ENCODE measurements at regions of chr11 and their contacts with region 1.

Region 1: GRCh38 chr11:65569973-65570918 is at the start of gene ZNRD2:
- DNase-seq: peak; percentile 95 to 99 (median 98)
- ATAC-seq: peak; percentile 64 to 78
- H3K4me3 Mint-ChIP-seq: peak within 1 kb of the TSS; percentile 97 to 100 (median 99)
- H3K27ac Mint-ChIP-seq: peak within 1 kb of the TSS; percentile 94 to 100 (median 99)
- H3K4me1 Mint-ChIP-seq: peaks cover 38 to 88% (median 75%) of the 10 kb centered on the region in 4 donors
- H3K27me3 Mint-ChIP-seq: no peaks in the 10 kb centered on the region
- polyA plus RNA-seq, gene ZNRD2: 62.9 to 86.3 (median 80.1) TPM

Region 2: DNA sequence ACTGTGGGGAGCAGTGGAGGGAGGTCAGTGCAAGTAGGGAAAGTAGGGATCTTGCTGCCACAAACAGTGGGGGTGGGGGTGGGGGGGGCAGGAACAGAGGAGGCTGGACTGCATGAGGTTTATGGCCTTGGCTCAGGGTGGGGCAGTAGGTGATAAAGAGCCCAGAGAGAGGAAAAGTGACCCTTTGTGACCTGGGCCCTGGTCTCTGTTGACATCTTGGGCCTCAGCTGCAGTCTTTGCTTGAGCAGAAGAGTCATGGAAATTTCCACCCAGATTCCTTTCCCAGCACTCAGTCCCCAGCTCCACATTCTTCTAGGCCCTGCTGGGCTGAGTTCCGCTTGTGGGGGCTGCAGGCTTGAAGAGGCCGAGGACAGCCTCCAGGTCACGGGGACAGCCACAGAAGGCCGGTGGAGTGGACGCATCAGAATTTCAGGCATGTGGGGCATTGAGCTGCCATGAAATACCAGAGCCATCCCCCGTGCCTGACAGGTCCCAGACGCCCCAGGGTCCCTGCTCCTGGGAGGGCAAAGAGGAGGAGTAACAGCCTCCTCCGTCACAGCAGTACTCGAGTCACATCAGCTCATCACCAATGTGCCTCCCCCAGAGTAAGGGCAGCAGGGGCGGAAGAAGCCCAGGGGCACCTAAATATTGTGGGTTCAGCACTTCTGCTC is 81.1 kb before region 1 on chr11:
- POLR2A ChIA-PET with region 1: no interaction called
- DNase-seq: no peak
- ATAC-seq: no peak
- H3K4me3 Mint-ChIP-seq: peak overlapping the region in 2 of 10 donors; percentile 45 to 70
- H3K27ac Mint-ChIP-seq: peak overlapping the region in 2 of 10 donors; percentile 25 to 85
- H3K4me1 Mint-ChIP-seq: peaks cover 12 to 43% (median 32%) of the 10 kb centered on the region in 4 donors
- H3K27me3 Mint-ChIP-seq: no peaks in the 10 kb centered on the region

Region 3: GRCh38 chr11:65506770-65507505 is 63.3 kb before region 1 on chr11:
- POLR2A ChIA-PET with region 1: interaction called, 14 read pairs
- DNase-seq: peak in 5 of 10 donors; percentile 50 to 57 (median 56)
- ATAC-seq: peak; percentile 36 to 55
- H3K4me3 Mint-ChIP-seq: no peak overlapping the region
- H3K27ac Mint-ChIP-seq: peak overlapping the region in 9 of 10 donors; percentile 67 to 95 (median 89)
- H3K4me1 Mint-ChIP-seq: peaks cover 38 to 66% (median 58%) of the 10 kb centered on the region in 4 donors
- H3K27me3 Mint-ChIP-seq: no peaks in the 10 kb centered on the region

Region 4: GRCh38 chr11:65540297-65541092 is 29.8 kb before region 1 on chr11:
- POLR2A ChIA-PET with region 1: interaction called, 260 read pairs
- DNase-seq: peak; percentile 79 to 99 (median 86)
- ATAC-seq: peak; percentile 77 to 84
- H3K4me3 Mint-ChIP-seq: peak overlapping the region; percentile 77 to 90 (median 85)
- H3K27ac Mint-ChIP-seq: peak overlapping the region; percentile 80 to 96 (median 86)
- H3K4me1 Mint-ChIP-seq: peaks cover 15 to 41% (median 31%) of the 10 kb centered on the region in 4 donors
- H3K27me3 Mint-ChIP-seq: no peaks in the 10 kb centered on the region

Region 5: GRCh38 chr11:65551572-65552398 is 18.5 kb before region 1 on chr11:
- POLR2A ChIA-PET with region 1: interaction called, 260 read pairs
- DNase-seq: peak in 7 of 10 donors; percentile 33 to 77 (median 49)
- ATAC-seq: peak; percentile 25 to 30
- H3K4me3 Mint-ChIP-seq: peak overlapping the region; percentile 16 to 91 (median 63)
- H3K27ac Mint-ChIP-seq: peak overlapping the region; percentile 61 to 93 (median 82)
- H3K4me1 Mint-ChIP-seq: peaks cover 51 to 77% (median 75%) of the 10 kb centered on the region in 4 donors
- H3K27me3 Mint-ChIP-seq: no peaks in the 10 kb centered on the region

Region 6: GRCh38 chr11:65588199-65589054 is 18.2 kb after region 1 on chr11:
- POLR2A ChIA-PET with region 1: interaction called, 139 read pairs
- DNase-seq: peak; percentile 57 to 88 (median 75)
- ATAC-seq: peak; percentile 94
- H3K4me3 Mint-ChIP-seq: peak overlapping the region in 2 of 10 donors; percentile 11 to 67
- H3K27ac Mint-ChIP-seq: peak overlapping the region; percentile 53 to 86 (median 74)
- H3K4me1 Mint-ChIP-seq: peaks cover 14 to 35% (median 35%) of the 10 kb centered on the region in 4 donors
- H3K27me3 Mint-ChIP-seq: no peaks in the 10 kb centered on the region

Region 7: DNA sequence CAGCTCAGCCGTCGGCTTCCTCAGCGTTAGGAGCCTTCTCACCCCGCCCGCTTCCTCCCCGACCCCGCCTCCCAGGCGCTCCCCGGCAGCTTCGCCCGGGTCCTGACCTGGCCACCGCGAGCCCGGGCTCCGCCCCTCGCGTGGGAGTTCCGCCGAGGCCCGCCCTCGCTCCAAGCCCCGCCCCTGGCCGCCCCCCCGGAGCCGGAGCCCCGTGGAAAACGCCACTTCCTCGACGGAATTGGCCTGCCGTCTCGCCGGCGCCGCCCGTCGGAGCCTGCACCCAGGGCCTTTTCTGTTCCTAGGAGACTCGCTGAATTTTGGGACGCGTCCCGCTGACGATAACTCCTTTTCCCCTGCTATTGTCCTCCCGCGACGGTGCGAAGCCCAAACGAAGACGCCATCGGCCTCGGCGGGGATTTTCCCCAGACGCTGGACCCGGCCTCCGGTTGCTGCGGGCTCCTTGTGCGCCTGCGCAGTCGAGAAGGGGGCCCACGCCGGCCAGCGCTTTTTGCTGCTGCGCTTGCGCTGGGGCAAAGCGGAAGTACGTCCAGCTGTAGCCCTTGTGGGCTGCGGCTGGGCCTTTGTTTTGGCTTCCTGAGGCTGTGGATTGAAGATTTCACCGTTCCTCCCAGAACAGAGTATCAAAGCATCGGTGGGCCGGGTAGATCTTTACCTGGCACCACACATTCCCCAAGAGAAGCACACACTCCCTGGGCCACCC is 82.4 kb after region 1 on chr11:
- POLR2A ChIA-PET with region 1: interaction called, 13 read pairs
- DNase-seq: peak; percentile 92 to 99 (median 96)
- ATAC-seq: peak; percentile 77 to 81
- H3K4me3 Mint-ChIP-seq: peak overlapping the region; percentile 73 to 95 (median 91)
- H3K27ac Mint-ChIP-seq: peak overlapping the region; percentile 96 to 99 (median 98)
- H3K4me1 Mint-ChIP-seq: peaks cover 38 to 66% (median 52%) of the 10 kb centered on the region in 4 donors
- H3K27me3 Mint-ChIP-seq: peaks cover 0 to 2% (median 0%) of the 10 kb centered on the region in 5 donors

Measured in naive thymus-derived CD8-positive, alpha-beta T cell (primary cell).